B cell (primary cell): ENCODE measurements at regions of chr10 and their contacts with region 1.

Region 1: DNA sequence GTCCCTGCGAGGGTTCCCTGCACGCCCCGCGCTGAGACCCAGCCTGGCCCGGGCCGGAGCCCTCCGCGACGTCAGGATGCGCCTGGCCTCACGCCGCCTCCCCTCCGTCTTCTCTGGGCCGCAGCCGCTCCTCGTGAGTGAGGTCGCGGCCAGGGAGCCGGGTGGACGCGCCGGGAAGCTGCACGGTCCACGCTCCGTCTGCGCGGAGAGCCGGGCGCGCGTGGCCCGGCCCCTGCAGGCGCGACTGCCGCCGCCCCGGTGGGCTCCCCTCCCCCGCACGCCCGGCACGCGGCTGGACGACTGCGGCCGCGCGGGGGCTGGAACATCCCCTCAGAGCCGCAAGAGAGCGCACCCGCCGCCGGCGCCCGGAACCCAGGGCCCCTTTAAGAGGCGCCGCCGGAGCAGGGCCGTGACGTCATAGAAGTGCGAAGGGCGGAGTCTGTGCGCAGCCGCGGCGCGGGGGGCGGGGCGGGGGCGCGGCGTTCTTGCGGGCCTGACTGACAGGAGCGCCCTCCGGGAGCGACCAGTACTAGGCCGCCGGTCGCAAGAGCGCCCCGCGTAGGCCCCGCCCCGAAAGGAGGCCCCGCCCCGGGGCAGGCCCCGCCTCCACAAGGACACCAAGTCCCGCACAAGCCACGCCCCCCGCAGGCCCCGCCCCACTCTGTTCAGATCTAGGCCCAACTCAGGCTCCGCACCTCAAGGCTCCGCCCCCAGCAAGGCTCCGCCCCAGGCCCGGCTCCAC is 445 bp upstream of the INPP5A start:
- DNase-seq: peak; percentile 100
- ATAC-seq: peak; percentile 89
- H3K4me3 ChIP-seq: peak overlapping the region in 4 of 5 experiments; percentile 45 to 75 (median 70)
- H3K4me3 Mint-ChIP-seq: peak overlapping the region; percentile 85
- H3K27ac ChIP-seq: peak overlapping the region; percentile 43 to 79
- H3K27ac Mint-ChIP-seq: peak overlapping the region; percentile 70
- H3K4me1 ChIP-seq: peaks cover 41 to 50% of the 10 kb centered on the region in 2 donors
- H3K4me1 Mint-ChIP-seq: peaks cover 52% of the 10 kb centered on the region
- H3K27me3 ChIP-seq: no peaks in the 10 kb centered on the region
- H3K27me3 Mint-ChIP-seq: no peaks in the 10 kb centered on the region
- CTCF ChIP-seq: peak; percentile 52

Region 2: DNA sequence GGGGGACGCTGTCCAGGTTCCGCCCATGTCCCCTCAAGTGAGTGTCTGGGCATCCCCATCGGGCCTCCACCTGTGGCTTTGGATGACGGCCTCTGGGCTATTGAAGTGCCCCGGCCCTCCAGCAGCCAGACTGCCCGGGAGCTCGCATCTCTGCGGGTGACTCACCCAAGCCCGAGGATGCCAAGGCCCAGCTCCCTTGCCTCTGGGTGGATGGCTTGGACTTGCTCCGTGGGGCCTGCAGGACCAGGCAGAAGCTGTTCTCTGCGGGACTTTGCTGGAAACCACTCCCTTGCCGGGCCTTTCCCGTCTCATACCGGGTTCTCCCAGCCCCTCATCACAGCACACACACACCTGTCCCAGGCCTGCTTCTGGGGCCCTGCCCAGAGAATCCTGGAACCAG is 328.0 kb before region 1 on chr10:
- CTCF ChIA-PET with region 1: no interaction called
- POLR2A ChIA-PET with region 1: no interaction called
- intact Hi-C with region 1: no loop called
- DNase-seq: no peak
- ATAC-seq: no peak
- H3K4me3 ChIP-seq: no peak overlapping the region
- H3K4me3 Mint-ChIP-seq: no peak overlapping the region
- H3K27ac ChIP-seq: no peak overlapping the region
- H3K27ac Mint-ChIP-seq: no peak overlapping the region
- H3K4me1 ChIP-seq: no peaks in the 10 kb centered on the region
- H3K4me1 Mint-ChIP-seq: peaks cover 5% of the 10 kb centered on the region
- H3K27me3 ChIP-seq: no peaks in the 10 kb centered on the region
- H3K27me3 Mint-ChIP-seq: no peaks in the 10 kb centered on the region
- CTCF ChIP-seq: no peak

Region 3: GRCh38 chr10:132331526-132332432 is 205.4 kb before region 1 on chr10 and contains the start of gene LRRC27:
- CTCF ChIA-PET with region 1: no interaction called
- POLR2A ChIA-PET with region 1: no interaction called
- intact Hi-C with region 1: loop called (anchors 1 kb)
- DNase-seq: peak; percentile 100
- ATAC-seq: peak; percentile 78
- H3K4me3 ChIP-seq: peak within 1 kb of the TSS; percentile 81 to 95 (median 90)
- H3K4me3 Mint-ChIP-seq: peak within 1 kb of the TSS; percentile 83
- H3K27ac ChIP-seq: peak within 1 kb of the TSS; percentile 93 to 96
- H3K27ac Mint-ChIP-seq: peak within 1 kb of the TSS; percentile 99
- H3K4me1 ChIP-seq: peaks cover 50 to 60% of the 10 kb centered on the region in 2 donors
- H3K4me1 Mint-ChIP-seq: peaks cover 75% of the 10 kb centered on the region
- H3K27me3 ChIP-seq: no peaks in the 10 kb centered on the region
- H3K27me3 Mint-ChIP-seq: no peaks in the 10 kb centered on the region
- CTCF ChIP-seq: no peak
- total RNA-seq, gene LRRC27: 23.6 and 32.2 TPM in 2 replicates

Region 4: GRCh38 chr10:132396495-132397035 is 140.6 kb before region 1 on chr10:
- CTCF ChIA-PET with region 1: no interaction called
- POLR2A ChIA-PET with region 1: no interaction called
- intact Hi-C with region 1: loop called (anchors 2 kb)
- DNase-seq: peak; percentile 86
- ATAC-seq: peak; percentile 69
- H3K4me3 ChIP-seq: peak overlapping the region in 4 of 5 experiments; percentile 49 to 73 (median 61)
- H3K4me3 Mint-ChIP-seq: no peak overlapping the region
- H3K27ac ChIP-seq: peak overlapping the region; percentile 75 to 89
- H3K27ac Mint-ChIP-seq: no peak overlapping the region
- H3K4me1 ChIP-seq: peaks cover 65 to 69% of the 10 kb centered on the region in 2 donors
- H3K4me1 Mint-ChIP-seq: peaks cover 58% of the 10 kb centered on the region
- H3K27me3 ChIP-seq: no peaks in the 10 kb centered on the region
- H3K27me3 Mint-ChIP-seq: no peaks in the 10 kb centered on the region
- CTCF ChIP-seq: peak; percentile 39

Region 5: GRCh38 chr10:132514821-132515520 is 22.2 kb before region 1 on chr10:
- CTCF ChIA-PET with region 1: interaction called, 3 read pairs
- POLR2A ChIA-PET with region 1: interaction called, 4 read pairs
- intact Hi-C with region 1: loop called (anchors 2 kb)
- DNase-seq: peak; percentile 66
- ATAC-seq: peak; percentile 70
- H3K4me3 ChIP-seq: peak overlapping the region in 4 of 5 experiments; percentile 9 to 55 (median 29)
- H3K4me3 Mint-ChIP-seq: peak overlapping the region; percentile 80
- H3K27ac ChIP-seq: peak overlapping the region; percentile 71 to 76
- H3K27ac Mint-ChIP-seq: no peak overlapping the region
- H3K4me1 ChIP-seq: peaks cover 27 to 31% of the 10 kb centered on the region in 2 donors
- H3K4me1 Mint-ChIP-seq: peaks cover 4% of the 10 kb centered on the region
- H3K27me3 ChIP-seq: peaks cover 0 to 4% (median 2%) of the 10 kb centered on the region in 4 experiments
- H3K27me3 Mint-ChIP-seq: peaks cover 4% of the 10 kb centered on the region
- CTCF ChIP-seq: no peak

Region 6: DNA sequence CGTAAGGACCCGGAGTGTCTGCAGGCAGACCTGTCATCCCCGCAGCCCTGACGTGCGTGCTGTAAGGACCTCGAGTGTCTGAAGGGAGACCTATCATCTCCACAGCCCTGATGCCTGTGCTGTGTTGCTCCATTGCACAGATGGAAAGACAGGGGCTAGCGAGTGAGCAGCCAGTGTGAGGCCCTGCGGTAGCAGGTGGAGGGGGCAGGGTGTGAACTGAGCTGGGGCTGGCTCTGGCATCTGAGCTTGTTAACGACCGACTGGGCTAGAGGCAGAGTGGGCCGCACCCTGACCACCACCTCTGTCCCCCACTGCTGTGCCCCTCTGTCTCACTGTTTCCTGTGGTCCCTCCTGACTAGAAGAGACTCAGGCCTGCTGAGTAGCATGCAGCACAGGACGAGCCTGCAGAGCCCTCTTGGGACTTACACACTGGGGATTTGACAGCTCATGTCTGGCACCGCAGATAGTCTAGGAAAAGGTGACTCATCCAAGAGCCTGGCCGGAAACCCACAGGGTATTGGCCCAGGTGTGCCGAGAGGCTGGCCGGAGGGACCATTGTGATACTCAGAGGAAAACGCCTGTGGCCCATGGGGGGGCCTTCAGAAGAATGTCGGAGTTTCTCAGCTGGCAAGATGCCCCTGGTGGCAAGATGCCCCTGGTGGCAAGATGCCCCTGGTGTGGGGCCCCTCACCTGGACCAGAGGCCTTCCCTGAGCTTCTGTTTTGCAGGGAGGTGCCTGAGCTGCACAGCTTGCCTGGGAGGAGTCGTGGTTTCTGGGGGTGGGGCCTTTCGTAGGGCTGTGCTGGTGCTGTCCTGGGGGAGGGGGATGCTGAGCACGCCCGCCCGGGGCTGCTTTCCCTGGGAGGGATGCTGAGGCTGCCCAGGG is 34.8 kb after region 1 on chr10:
- CTCF ChIA-PET with region 1: interaction called, 12 read pairs
- POLR2A ChIA-PET with region 1: interaction called, 14 read pairs
- intact Hi-C with region 1: loop called (anchors 1 kb)
- DNase-seq: peak; percentile 88
- ATAC-seq: peak; percentile 77
- H3K4me3 ChIP-seq: peak overlapping the region in 3 of 5 experiments; percentile 10 to 20 (median 11)
- H3K4me3 Mint-ChIP-seq: no peak overlapping the region
- H3K27ac ChIP-seq: peak overlapping the region; percentile 85 to 86
- H3K27ac Mint-ChIP-seq: no peak overlapping the region
- H3K4me1 ChIP-seq: peaks cover 49 to 59% of the 10 kb centered on the region in 2 donors
- H3K4me1 Mint-ChIP-seq: peaks cover 20% of the 10 kb centered on the region
- H3K27me3 ChIP-seq: no peaks in the 10 kb centered on the region
- H3K27me3 Mint-ChIP-seq: no peaks in the 10 kb centered on the region
- CTCF ChIP-seq: peak; percentile 64

Region 7: GRCh38 chr10:132637477-132638129 is 100.5 kb after region 1 on chr10:
- CTCF ChIA-PET with region 1: interaction called, 4 read pairs
- POLR2A ChIA-PET with region 1: no interaction called
- intact Hi-C with region 1: loop called (anchors 1 kb)
- DNase-seq: peak; percentile 79
- ATAC-seq: peak; percentile 55
- H3K4me3 ChIP-seq: no peak overlapping the region
- H3K4me3 Mint-ChIP-seq: peak overlapping the region; percentile 37
- H3K27ac ChIP-seq: no peak overlapping the region
- H3K27ac Mint-ChIP-seq: peak overlapping the region; percentile 64
- H3K4me1 ChIP-seq: peaks cover 29 to 30% of the 10 kb centered on the region in 2 donors
- H3K4me1 Mint-ChIP-seq: peaks cover 36% of the 10 kb centered on the region
- H3K27me3 ChIP-seq: no peaks in the 10 kb centered on the region
- H3K27me3 Mint-ChIP-seq: no peaks in the 10 kb centered on the region
- CTCF ChIP-seq: peak; percentile 75